ENCODE measurements at regions of chr14 and their contacts with region 1.

Region 1: DNA sequence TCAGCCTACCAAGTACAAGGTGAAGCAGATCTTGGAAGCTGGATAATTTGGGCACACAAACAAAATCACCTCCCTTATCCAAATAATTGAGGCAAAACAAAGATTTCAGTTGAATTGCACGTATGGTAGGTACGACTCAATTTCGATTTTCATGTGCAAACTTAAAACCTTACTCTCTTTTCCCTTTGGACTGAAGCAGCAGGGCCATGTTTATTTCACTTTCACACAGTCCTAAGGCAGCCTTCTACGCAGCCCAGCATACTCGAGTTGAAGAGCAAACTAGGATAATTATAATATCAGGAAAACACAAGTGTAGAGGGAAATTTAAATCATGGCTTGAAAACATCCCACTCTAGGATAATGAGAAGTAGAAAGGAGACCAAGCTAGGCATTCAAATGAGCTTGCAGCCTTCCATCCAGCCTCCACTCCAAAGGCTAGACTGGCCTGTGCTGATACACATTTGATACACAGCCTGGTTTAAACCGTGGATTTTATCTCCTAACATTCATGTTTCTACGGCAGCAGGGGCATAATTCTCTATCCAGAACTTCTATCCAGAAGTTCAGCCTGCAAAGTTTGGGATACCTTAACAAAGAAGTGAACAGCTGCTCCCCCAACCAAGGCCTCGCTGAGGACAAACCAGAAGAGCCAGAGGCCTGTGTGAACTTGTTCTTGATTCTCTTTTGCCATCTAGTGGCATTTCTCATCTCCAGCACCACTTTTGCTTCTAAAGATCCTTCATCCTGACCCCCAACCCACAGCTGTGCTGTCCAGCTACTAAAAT is 2.4 kb upstream of the RNASE7 start:
- DNase-seq: peak; percentile 63 to 66
- ATAC-seq: peak; percentile 85 to 94
- H3K4me3 ChIP-seq: no peak overlapping the region
- H3K27ac ChIP-seq: no peak overlapping the region
- H3K4me1 ChIP-seq: no peaks in the 10 kb centered on the region
- CTCF ChIP-seq: peak; percentile 71
- EP300 ChIP-seq: no peak
- POLR2A ChIP-seq: no peak
- RAD21 ChIP-seq: peak; percentile 81 to 82

Region 2: GRCh38 chr14:20690848-20691523 is 348.8 kb before region 1 on chr14:
- CTCF ChIA-PET with region 1: interaction called, 24 read pairs
- POLR2A ChIA-PET with region 1: no interaction called
- DNase-seq: peak; percentile 71 to 81
- ATAC-seq: peak; percentile 82 to 84
- H3K4me3 ChIP-seq: peak overlapping the region; percentile 5; the same call in 1 of the 3 replicates
- H3K27ac ChIP-seq: peak overlapping the region; percentile 2 to 26; a peak in 1 of 6 replicates
- H3K4me1 ChIP-seq: peaks cover 34% of the 10 kb centered on the region
- CTCF ChIP-seq: peak; percentile 88
- EP300 ChIP-seq: no peak
- POLR2A ChIP-seq: no peak
- RAD21 ChIP-seq: peak; percentile 88 to 92

Region 3: GRCh38 chr14:20697273-20698017 is 342.3 kb before region 1 on chr14:
- CTCF ChIA-PET with region 1: interaction called, 24 read pairs
- POLR2A ChIA-PET with region 1: no interaction called
- DNase-seq: peak; percentile 67 to 79
- ATAC-seq: peak; percentile 95 to 96
- H3K4me3 ChIP-seq: no peak overlapping the region
- H3K27ac ChIP-seq: no peak overlapping the region
- H3K4me1 ChIP-seq: 0 out of 3 replicates have a peak, but pooled peaks cover 3% of the 10 kb centered on the region
- CTCF ChIP-seq: peak; percentile 83
- EP300 ChIP-seq: no peak
- POLR2A ChIP-seq: no peak
- RAD21 ChIP-seq: peak; percentile 88 to 93

Region 4: DNA sequence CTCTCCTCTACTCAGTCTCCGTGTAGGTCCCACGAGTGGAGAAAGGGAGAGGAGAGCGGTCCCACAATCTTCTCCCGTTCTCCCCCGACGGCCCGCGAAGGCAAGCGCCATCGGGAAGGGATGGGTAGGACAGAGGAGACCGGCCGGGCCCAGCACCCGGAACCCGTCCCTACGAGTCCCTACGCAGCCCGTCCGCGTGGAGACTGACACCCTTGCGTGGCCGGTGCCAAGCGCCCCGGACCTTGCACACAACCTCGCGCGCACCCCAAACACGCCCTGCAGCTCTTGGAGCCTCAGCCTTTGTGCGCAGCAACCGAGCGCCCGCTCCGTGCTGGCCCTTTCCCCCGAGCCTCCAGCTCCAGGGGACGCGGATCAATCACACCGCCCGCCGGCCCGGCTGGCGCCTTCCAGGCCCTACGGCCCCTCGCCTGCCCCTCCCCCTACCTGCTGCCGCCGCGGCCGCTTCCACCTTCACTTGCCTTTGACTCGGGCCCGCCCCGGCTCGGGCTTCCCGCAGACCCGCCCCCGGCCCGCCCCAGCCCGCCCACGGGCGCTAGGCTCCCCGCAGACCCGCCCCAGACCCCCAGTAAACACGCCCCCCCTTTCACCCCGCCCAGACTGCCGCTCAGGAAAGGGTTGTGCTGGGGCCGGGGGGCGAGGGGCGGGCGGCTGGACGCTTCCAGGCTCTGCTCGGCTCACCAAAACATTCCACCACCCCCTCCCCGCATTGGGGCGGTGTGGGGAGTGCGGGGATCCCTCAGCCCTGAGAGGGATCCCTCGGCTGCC is 15.0 kb before region 1 on chr14 and contains the start of gene NDRG2:
- CTCF ChIA-PET with region 1: interaction called, 323 read pairs
- POLR2A ChIA-PET with region 1: no interaction called
- DNase-seq: peak; percentile 14 to 49
- ATAC-seq: peak; percentile 78 to 85
- H3K4me3 ChIP-seq: peak within 1 kb of the TSS; percentile 58
- H3K27ac ChIP-seq: peak within 1 kb of the TSS; percentile 67 to 84
- H3K4me1 ChIP-seq: 0 out of 3 replicates have a peak, but pooled peaks cover 3% of the 10 kb centered on the region
- CTCF ChIP-seq: no peak
- EP300 ChIP-seq: no peak
- POLR2A ChIP-seq: no peak
- RAD21 ChIP-seq: no peak
- polyA plus RNA-seq, gene NDRG2: 6.8 and 8.8 TPM in 2 replicates

Region 5: GRCh38 chr14:21063479-21063878 is 23.7 kb after region 1 on chr14:
- CTCF ChIA-PET with region 1: interaction called, 26 read pairs
- POLR2A ChIA-PET with region 1: no interaction called
- DNase-seq: no peak
- ATAC-seq: peak; percentile 37 to 62; a peak in 3 of 6 replicates
- H3K4me3 ChIP-seq: no peak overlapping the region
- H3K27ac ChIP-seq: peak overlapping the region; percentile 22 to 52; a peak in 3 of 6 replicates
- H3K4me1 ChIP-seq: peaks cover 23% of the 10 kb centered on the region
- CTCF ChIP-seq: no peak
- EP300 ChIP-seq: no peak
- POLR2A ChIP-seq: no peak
- RAD21 ChIP-seq: no peak

Region 6: GRCh38 chr14:21071225-21072030 is 31.7 kb after region 1 on chr14:
- CTCF ChIA-PET with region 1: interaction called, 26 read pairs
- POLR2A ChIA-PET with region 1: no interaction called
- DNase-seq: peak; percentile 37 to 58
- ATAC-seq: peak; percentile 45 to 67
- H3K4me3 ChIP-seq: peak overlapping the region; percentile 79
- H3K27ac ChIP-seq: peak overlapping the region; percentile 83 to 95
- H3K4me1 ChIP-seq: peaks cover 23% of the 10 kb centered on the region
- CTCF ChIP-seq: no peak
- EP300 ChIP-seq: no peak
- POLR2A ChIP-seq: no peak; the same call in 1 of the 2 replicates
- RAD21 ChIP-seq: no peak

Region 7: GRCh38 chr14:21103710-21104447 is 64.1 kb after region 1 on chr14:
- CTCF ChIA-PET with region 1: interaction called, 18 read pairs
- POLR2A ChIA-PET with region 1: no interaction called
- DNase-seq: peak; percentile 93 to 98
- ATAC-seq: peak; percentile 82 to 91
- H3K4me3 ChIP-seq: peak overlapping the region; percentile 57
- H3K27ac ChIP-seq: peak overlapping the region; percentile 96 to 97
- H3K4me1 ChIP-seq: peaks cover 81% of the 10 kb centered on the region
- CTCF ChIP-seq: peak; percentile 56
- EP300 ChIP-seq: 0 out of 5 replicates have a peak, but pooled peaks of 1 of the 2 experiments have one; percentile 15
- POLR2A ChIP-seq: peak; percentile 86
- RAD21 ChIP-seq: peak; percentile 10 to 20; a peak in 1 of 5 replicates

Measured in A549 (cell line).